Heart left ventricle (tissue), 16 donors: ENCODE measurements at regions of chr17 and their contacts with region 1.

Region 1: DNA sequence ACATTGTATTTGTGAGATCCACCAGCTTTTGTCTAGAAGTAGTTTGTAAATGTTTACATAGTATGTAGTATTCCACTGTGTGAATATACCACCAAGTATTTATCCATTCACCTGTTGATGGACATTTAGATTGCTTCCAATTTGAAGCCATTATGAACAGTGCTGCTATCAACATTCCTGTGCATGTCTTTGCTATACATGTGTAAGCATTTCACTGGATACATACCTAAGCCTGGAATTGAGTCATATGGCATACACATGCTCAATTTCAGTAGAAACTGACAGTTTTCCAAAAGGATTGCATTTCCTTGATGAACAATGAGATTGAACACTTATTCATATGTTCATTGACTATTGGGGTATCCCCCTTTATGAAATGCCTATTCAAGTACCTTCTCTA is 540.6 kb upstream of the SOX9 start:
- DNase-seq: no peak
- ATAC-seq: no peak
- H3K4me3 ChIP-seq: no peak overlapping the region
- H3K27ac ChIP-seq: no peak overlapping the region
- H3K4me1 ChIP-seq: no peaks in the 10 kb centered on the region
- H3K27me3 ChIP-seq: no peaks in the 10 kb centered on the region
- CTCF ChIP-seq: no peak
- POLR2A ChIP-seq: no peak

Region 2: DNA sequence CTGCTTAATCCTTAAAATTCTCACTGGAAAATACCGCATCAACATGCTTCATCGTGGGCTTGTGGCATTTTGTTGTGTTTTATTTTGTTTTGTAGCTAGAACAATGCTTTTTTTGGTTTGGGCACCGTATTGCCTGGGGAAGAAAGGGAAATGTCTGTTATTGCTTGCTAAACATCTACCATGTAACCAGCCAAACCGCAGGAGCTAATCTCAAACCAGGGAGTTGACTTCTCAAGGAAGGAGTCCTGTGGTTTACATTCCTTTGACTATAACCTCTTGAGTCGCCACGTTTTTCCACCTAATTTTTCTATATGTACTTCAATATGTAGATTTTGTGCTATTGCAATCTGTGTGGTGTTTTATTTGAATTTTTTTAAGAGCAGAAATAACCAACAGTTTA is 52.9 kb before region 1 on chr17:
- intact Hi-C with region 1: loop called in 1 of 10 experiments (anchors 10 kb)
- DNase-seq: no peak
- ATAC-seq: no peak
- H3K4me3 ChIP-seq: no peak overlapping the region
- H3K27ac ChIP-seq: no peak overlapping the region
- H3K4me1 ChIP-seq: no peaks in the 10 kb centered on the region
- H3K27me3 ChIP-seq: no peaks in the 10 kb centered on the region
- CTCF ChIP-seq: no peak
- POLR2A ChIP-seq: no peak